B cell (primary cell): ENCODE measurements at regions of chr17 and their contacts with region 1.

Region 1: GRCh38 chr17:21318439-21318838 is 33.9 kb downstream of the MAP2K3 start:
- DNase-seq: no peak
- ATAC-seq: no peak
- H3K4me3 ChIP-seq: no peak overlapping the region
- H3K4me3 Mint-ChIP-seq: no peak overlapping the region
- H3K27ac ChIP-seq: no peak overlapping the region
- H3K27ac Mint-ChIP-seq: no peak overlapping the region
- H3K4me1 ChIP-seq: peaks cover 0 to 9% of the 10 kb centered on the region in 2 donors
- H3K4me1 Mint-ChIP-seq: peaks cover 7% of the 10 kb centered on the region
- H3K27me3 ChIP-seq: peaks cover 0 to under 1% (median 0%) of the 10 kb centered on the region in 4 experiments
- H3K27me3 Mint-ChIP-seq: peaks cover 3% of the 10 kb centered on the region
- CTCF ChIP-seq: no peak

Region 2: GRCh38 chr17:21252796-21253645 is 65.4 kb before region 1 on chr17 and contains the start of gene NATD1:
- CTCF ChIA-PET with region 1: no interaction called
- POLR2A ChIA-PET with region 1: no interaction called
- intact Hi-C with region 1: loop called (anchors 2 kb)
- DNase-seq: peak; percentile 90
- ATAC-seq: peak; percentile 79
- H3K4me3 ChIP-seq: peak within 1 kb of the TSS; percentile 35 to 90 (median 61)
- H3K4me3 Mint-ChIP-seq: peak within 1 kb of the TSS; percentile 89
- H3K27ac ChIP-seq: peak within 1 kb of the TSS; percentile 5 to 70
- H3K27ac Mint-ChIP-seq: peak within 1 kb of the TSS; percentile 88
- H3K4me1 ChIP-seq: peaks cover 11 to 24% of the 10 kb centered on the region in 2 donors
- H3K4me1 Mint-ChIP-seq: peaks cover 22% of the 10 kb centered on the region
- H3K27me3 ChIP-seq: no peaks in the 10 kb centered on the region
- H3K27me3 Mint-ChIP-seq: peaks cover 5% of the 10 kb centered on the region
- CTCF ChIP-seq: no peak
- total RNA-seq, gene NATD1: 6.2 and 6.7 TPM in 2 replicates

Region 3: GRCh38 chr17:21304091-21304490 is 14.3 kb before region 1 on chr17:
- CTCF ChIA-PET with region 1: no interaction called
- POLR2A ChIA-PET with region 1: no interaction called
- intact Hi-C with region 1: no loop called
- DNase-seq: no peak
- ATAC-seq: no peak
- H3K4me3 ChIP-seq: no peak overlapping the region
- H3K4me3 Mint-ChIP-seq: no peak overlapping the region
- H3K27ac ChIP-seq: no peak overlapping the region
- H3K27ac Mint-ChIP-seq: no peak overlapping the region
- H3K4me1 ChIP-seq: no peaks in the 10 kb centered on the region
- H3K4me1 Mint-ChIP-seq: no peaks in the 10 kb centered on the region
- H3K27me3 ChIP-seq: no peaks in the 10 kb centered on the region
- H3K27me3 Mint-ChIP-seq: no peaks in the 10 kb centered on the region
- CTCF ChIP-seq: no peak

Region 4: DNA sequence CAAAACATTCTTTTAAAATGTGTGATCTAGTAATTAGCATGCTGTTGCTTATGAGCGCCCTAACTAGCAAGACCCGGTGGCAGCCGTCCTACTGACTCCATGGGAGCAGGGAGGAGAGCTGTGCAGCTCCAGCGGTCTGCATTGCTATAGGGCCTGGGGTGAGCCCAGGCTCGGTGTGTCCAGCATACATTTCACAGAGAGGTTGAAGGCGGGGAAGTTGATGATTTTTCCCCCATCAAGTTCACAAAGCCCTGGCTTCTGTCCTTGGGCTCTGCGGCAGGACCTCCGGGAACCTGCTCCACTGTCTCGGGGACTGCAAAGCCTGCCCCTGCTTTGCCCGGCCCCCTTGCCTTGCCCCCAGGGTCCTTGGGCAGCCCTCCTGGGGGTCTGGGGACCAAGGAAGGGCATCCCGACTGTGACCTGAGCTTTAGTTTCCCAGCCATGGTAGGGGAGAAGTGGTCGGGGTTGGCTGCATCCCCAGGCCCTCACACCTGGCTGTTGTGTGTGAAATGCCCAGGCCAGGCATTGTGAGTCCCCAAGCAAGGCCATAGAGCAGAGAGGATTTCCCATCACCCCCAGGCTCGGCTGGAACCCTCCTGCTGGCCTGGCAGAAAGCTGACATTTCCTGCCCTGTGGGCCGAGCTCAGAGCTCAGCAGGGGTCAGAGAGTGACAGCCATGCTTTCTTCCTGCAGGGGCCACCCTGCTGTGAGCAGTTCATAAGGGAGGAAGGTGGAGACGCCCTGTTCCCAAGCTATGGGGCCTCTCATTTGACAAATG is 82.6 kb after region 1 on chr17:
- CTCF ChIA-PET with region 1: no interaction called
- POLR2A ChIA-PET with region 1: no interaction called
- intact Hi-C with region 1: no loop called
- DNase-seq: no peak
- ATAC-seq: no peak
- H3K4me3 ChIP-seq: no peak overlapping the region
- H3K4me3 Mint-ChIP-seq: no peak overlapping the region
- H3K27ac ChIP-seq: no peak overlapping the region
- H3K27ac Mint-ChIP-seq: no peak overlapping the region
- H3K4me1 ChIP-seq: no peaks in the 10 kb centered on the region
- H3K4me1 Mint-ChIP-seq: no peaks in the 10 kb centered on the region
- H3K27me3 ChIP-seq: no peaks in the 10 kb centered on the region
- H3K27me3 Mint-ChIP-seq: no peaks in the 10 kb centered on the region
- CTCF ChIP-seq: no peak